HCT116 (cell line): ENCODE measurements at regions of chrX and their contacts with region 1.

Region 1: DNA sequence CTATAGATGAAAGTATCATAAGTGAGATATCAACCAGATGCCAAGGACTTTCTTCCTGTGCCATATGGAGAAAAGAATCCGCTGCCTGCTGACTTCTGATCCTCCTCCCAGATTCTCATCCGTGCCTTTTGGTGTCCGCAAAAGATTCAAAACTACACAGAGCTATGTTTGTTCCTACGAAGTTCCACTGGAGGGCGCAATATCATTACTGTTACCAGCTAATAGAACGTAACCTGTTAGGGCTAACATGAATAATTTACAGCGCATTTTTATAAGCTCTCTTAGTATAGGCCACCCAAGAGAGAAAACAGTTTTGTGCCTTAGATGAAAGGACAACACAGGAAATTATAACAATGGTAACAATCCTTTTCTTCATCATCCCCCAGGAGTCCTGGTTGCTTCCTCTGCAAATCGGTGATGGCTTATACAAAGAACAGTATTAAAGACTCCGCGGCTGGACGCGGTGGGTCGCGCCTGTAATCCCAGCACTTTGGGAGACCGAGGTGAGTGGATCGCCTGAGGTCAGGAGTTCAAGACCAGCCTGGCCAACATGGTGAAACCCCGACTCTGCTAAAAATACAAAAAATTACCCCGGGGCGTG is 22.8 kb upstream of the CENPVL3 start:
- DNase-seq: peak; percentile 36
- ATAC-seq: peak; percentile 84
- H3K4me3 ChIP-seq: no peak overlapping the region
- H3K27ac ChIP-seq: no peak overlapping the region
- H3K4me1 ChIP-seq: no peaks in the 10 kb centered on the region
- H3K27me3 ChIP-seq: no peaks in the 10 kb centered on the region
- CTCF ChIP-seq: peak; percentile 43 to 63 (median 50); a peak in 5 of 6 replicates
- POLR2A ChIP-seq: no peak
- RAD21 ChIP-seq: peak; percentile 84

Region 2: GRCh38 chrX:51802917-51803688 is 161.6 kb after region 1 on chrX:
- CTCF ChIA-PET with region 1: interaction called, 5 read pairs
- POLR2A ChIA-PET with region 1: no interaction called
- RAD21 ChIA-PET with region 1: no interaction called
- intact Hi-C with region 1: loop called (anchors 1 kb)
- DNase-seq: peak; percentile 60
- ATAC-seq: peak; percentile 95
- H3K4me3 ChIP-seq: peak overlapping the region; percentile 67 to 77
- H3K27ac ChIP-seq: peak overlapping the region; percentile 71
- H3K4me1 ChIP-seq: peaks cover 0 to 9% of the 10 kb centered on the region in 2 experiments; a peak in 1 of 4 replicates
- H3K27me3 ChIP-seq: no peaks in the 10 kb centered on the region
- CTCF ChIP-seq: peak; percentile 15 to 34 (median 16); a peak in 3 of 6 replicates
- POLR2A ChIP-seq: peak; percentile 57
- RAD21 ChIP-seq: peak; percentile 31; the same call in 1 of the 2 replicates

Region 3: DNA sequence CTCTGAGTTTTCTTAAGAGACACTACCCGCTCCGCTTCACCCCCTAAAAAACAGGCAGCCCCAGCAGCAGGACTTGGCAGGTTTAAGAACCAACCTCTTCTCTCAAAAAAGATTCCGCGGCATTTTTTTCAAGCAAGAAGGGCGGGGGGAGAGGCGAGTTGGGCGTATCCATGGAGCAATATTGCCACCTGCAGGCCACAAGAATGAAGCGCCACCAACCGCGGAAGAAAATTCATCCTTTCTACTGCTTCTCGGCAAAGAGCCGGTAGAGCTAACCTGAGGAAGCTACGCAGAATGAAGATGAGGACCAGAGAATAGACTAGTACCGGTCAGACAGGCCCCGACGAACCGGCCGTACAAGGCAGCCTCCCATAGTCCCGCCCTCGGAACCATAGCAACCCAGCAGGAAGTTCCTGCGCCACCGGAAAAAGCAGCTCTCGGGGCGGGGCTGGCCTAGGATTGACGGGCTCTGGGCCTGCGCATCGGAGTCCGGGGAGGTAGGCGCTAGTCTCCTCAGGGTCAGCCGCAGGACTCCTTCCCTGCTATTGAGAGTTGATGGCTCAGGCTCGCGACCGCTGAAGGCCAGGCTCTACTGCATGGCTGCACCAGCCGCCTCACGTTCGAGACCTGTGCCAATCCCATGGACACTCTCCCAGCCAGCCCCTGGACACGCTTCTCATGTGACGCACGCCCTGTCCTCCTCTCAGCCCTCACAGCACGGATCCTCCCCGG is 620.1 kb after region 1 on chrX:
- CTCF ChIA-PET with region 1: interaction called, 6 read pairs
- POLR2A ChIA-PET with region 1: interaction called, 4 read pairs
- RAD21 ChIA-PET with region 1: interaction called in 1 of 2 experiments, 4 read pairs
- intact Hi-C with region 1: loop called (anchors 2 kb)
- DNase-seq: peak; percentile 53
- ATAC-seq: peak; percentile 97
- H3K4me3 ChIP-seq: peak overlapping the region; percentile 39 to 48
- H3K27ac ChIP-seq: peak overlapping the region; percentile 61
- H3K4me1 ChIP-seq: peaks cover 3 to 13% of the 10 kb centered on the region in 2 experiments; a peak in 2 of 4 replicates
- H3K27me3 ChIP-seq: no peaks in the 10 kb centered on the region
- CTCF ChIP-seq: peak; percentile 26 to 72 (median 56); a peak in 5 of 6 replicates
- POLR2A ChIP-seq: no peak
- RAD21 ChIP-seq: peak; percentile 86